H1 (cell line): ENCODE measurements at regions of chr6 and their contacts with region 1.

Region 1: GRCh38 chr6:30489081-30490025 is at the start of gene HLA-E:
- DNase-seq: peak; percentile 87 to 94
- H3K4me3 ChIP-seq: peak within 1 kb of the TSS; percentile 79 to 94 (median 86)
- H3K27ac ChIP-seq: peak within 1 kb of the TSS; percentile 30; the same call in 1 of the 2 replicates
- H3K4me1 ChIP-seq: peaks cover 0 to 5% (median 2%) of the 10 kb centered on the region in 4 experiments; a peak in 5 of 7 replicates
- H3K27me3 ChIP-seq: no peaks in the 10 kb centered on the region; a peak in 1 of 7 replicates
- CTCF ChIP-seq: no peak
- EP300 ChIP-seq: no peak
- POLR2A ChIP-seq: peak; percentile 98
- RAD21 ChIP-seq: 0 out of 4 replicates have a peak, but pooled peaks of 1 of the 2 experiments have one; percentile 2
- total RNA-seq, gene HLA-E: 24.4 and 28.0 TPM in 2 replicates

Region 2: DNA sequence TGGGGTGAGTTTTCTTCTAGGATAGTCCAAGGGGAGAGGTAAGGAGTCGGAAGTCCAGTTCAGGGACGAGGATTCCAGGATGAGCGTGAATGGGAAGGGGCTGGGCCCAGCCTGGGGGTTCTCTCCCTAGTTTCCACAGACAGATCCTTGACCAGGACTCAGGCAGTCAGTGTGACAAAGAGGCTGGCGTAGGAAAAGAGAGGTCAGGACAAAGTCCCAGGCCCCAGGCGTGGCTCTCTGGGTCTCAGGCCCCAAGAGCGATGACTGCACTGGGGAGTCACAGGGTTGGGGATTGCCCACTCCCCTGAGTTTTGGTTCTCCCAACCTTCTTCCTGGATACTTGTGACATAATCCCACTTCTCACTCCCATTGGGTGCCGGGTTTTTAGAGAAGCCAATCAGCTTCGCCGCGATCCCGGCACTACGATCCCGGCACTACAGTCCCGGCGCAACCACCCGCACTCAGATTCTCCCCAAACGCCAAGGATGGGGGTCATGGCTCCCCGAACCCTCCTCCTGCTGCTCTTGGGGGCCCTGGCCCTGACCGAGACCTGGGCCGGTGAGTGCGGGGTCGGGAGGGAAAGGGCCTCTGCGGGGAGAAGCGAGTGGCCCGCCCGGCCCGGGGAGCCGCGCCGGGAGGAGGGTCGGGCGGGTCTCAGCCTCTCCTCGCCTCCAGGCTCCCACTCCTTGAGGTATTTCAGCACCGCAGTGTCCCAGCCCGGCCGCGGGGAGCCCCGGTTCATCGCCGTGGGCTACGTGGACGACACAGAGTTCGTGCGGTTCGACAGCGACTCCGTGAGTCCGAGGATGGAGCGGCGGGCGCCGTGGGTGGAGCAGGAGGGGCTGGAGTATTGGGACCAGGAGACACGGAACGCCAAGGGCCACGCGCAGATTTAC is 230.0 kb before region 1 on chr6:
- CTCF ChIA-PET with region 1: no interaction called
- POLR2A ChIA-PET with region 1: no interaction called
- DNase-seq: peak; percentile 38 to 87
- H3K4me3 ChIP-seq: peak overlapping the region; percentile 64 to 86 (median 71)
- H3K27ac ChIP-seq: no peak overlapping the region
- H3K4me1 ChIP-seq: peaks cover 0 to 8% (median 2%) of the 10 kb centered on the region in 4 experiments; a peak in 6 of 7 replicates
- H3K27me3 ChIP-seq: peaks cover 9 to 17% (median 13%) of the 10 kb centered on the region in 4 experiments
- CTCF ChIP-seq: no peak
- EP300 ChIP-seq: no peak
- POLR2A ChIP-seq: peak in 1 of 2 experiments; percentile 51; a peak in 1 of 3 replicates
- RAD21 ChIP-seq: no peak; a peak in 1 of 4 replicates

Region 3: DNA sequence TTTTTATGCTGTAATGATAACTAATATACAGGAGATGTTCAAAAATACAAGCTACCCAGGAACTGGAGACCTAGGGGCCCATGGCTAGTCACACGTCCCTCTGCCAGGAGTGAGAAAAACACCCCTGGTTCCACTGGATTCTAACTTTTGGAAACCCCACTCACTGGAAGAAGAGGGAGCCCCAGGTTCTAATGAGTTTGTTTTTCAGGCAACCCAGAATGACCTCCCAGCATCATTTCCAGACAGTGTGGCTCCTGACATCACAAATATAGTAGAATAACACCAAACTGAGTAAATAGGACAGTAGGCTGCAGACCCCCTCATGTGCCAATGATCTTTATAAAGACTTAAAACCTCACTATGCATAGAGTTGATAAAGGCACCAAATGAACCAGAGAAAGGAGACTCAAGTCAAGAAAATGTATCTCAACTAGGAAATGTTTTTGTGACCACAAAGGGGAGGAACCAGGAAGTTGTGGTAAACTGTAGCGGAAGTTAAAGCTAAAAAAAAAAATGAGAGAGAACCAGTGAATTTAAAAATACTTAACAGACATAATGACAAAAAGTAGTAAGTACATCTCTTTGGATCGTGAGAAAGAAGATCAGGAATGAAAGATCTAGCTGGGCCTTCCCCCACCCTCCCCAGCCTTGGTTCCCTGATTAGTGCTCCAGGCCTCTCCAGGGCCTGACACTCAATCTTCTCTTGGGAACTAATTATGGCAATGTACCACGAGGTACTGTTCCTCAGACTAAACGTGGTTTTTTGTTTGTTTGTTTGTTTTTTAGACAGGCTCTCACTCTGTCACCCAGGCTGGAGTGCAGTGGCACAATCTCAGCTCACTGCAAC is 19.8 kb after region 1 on chr6:
- CTCF ChIA-PET with region 1: interaction called, 46 read pairs
- POLR2A ChIA-PET with region 1: interaction called, 5 read pairs
- DNase-seq: no peak
- H3K4me3 ChIP-seq: no peak overlapping the region
- H3K27ac ChIP-seq: no peak overlapping the region
- H3K4me1 ChIP-seq: 0 out of 7 replicates have a peak, but pooled peaks cover 0 to 2% (median 0%) of the 10 kb centered on the region in 4 experiments
- H3K27me3 ChIP-seq: no peaks in the 10 kb centered on the region
- CTCF ChIP-seq: no peak
- EP300 ChIP-seq: no peak
- POLR2A ChIP-seq: no peak
- RAD21 ChIP-seq: no peak